AG04449 (cell line): ENCODE measurements at regions of chr7 and their contacts with region 1.

Region 1: GRCh38 chr7:106176414-106177299 is 64.5 kb upstream of the SYPL1 start:
- DNase-seq: no peak
- H3K4me3 ChIP-seq: no peak overlapping the region
- CTCF ChIP-seq: peak; percentile 98

Region 2: GRCh38 chr7:105985229-105985628 is 191.4 kb before region 1 on chr7:
- CTCF ChIA-PET with region 1: no interaction called
- POLR2A ChIA-PET with region 1: no interaction called
- DNase-seq: no peak
- H3K4me3 ChIP-seq: no peak overlapping the region
- CTCF ChIP-seq: no peak

Region 3: GRCh38 chr7:106367018-106367420 is 190.4 kb after region 1 on chr7:
- CTCF ChIA-PET with region 1: interaction called, 20 read pairs
- POLR2A ChIA-PET with region 1: no interaction called
- DNase-seq: no peak
- H3K4me3 ChIP-seq: no peak overlapping the region
- CTCF ChIP-seq: peak; percentile 44

Region 4: GRCh38 chr7:106448992-106449859 is 272.6 kb after region 1 on chr7:
- CTCF ChIA-PET with region 1: interaction called, 17 read pairs
- POLR2A ChIA-PET with region 1: no interaction called
- DNase-seq: no peak
- H3K4me3 ChIP-seq: no peak overlapping the region
- CTCF ChIP-seq: no peak

Region 5: GRCh38 chr7:106542550-106543220 is 366.0 kb after region 1 on chr7:
- CTCF ChIA-PET with region 1: interaction called, 19 read pairs
- POLR2A ChIA-PET with region 1: no interaction called
- DNase-seq: peak; percentile 70
- H3K4me3 ChIP-seq: no peak overlapping the region
- CTCF ChIP-seq: peak; percentile 55

Region 6: GRCh38 chr7:106731187-106731586 is 554.5 kb after region 1 on chr7:
- CTCF ChIA-PET with region 1: interaction called, 167 read pairs
- POLR2A ChIA-PET with region 1: no interaction called
- DNase-seq: no peak
- H3K4me3 ChIP-seq: no peak overlapping the region
- CTCF ChIP-seq: no peak

Region 7: DNA sequence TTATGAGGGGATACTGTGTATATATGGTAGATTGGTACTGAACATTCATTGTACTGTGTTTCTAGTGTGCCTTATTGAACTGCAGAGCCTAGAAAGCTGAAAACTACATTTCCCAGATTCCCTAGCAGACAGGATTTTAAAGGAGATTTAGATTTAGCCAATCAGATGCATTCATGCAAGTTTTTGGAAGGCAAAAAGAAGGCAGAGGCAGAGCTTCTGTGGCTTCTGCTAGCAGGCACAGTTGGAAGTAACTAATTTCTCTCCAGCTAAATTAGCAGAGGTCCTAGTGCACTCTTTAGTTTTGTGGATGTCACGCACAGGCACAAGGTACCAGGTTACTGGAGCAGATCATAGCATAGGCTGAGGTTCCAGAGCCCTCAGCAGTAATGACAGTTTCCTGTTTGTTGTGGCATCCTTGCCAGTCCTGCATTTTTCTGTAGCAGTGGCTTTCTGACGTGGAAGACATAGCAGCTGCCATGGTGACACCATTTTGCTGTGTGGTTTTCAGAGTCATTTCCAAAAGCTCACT is 568.0 kb after region 1 on chr7:
- CTCF ChIA-PET with region 1: interaction called, 11 read pairs
- POLR2A ChIA-PET with region 1: no interaction called
- DNase-seq: no peak
- H3K4me3 ChIP-seq: no peak overlapping the region
- CTCF ChIP-seq: no peak